ENCODE measurements at regions of chr5 and their contacts with region 1.

Region 1: DNA sequence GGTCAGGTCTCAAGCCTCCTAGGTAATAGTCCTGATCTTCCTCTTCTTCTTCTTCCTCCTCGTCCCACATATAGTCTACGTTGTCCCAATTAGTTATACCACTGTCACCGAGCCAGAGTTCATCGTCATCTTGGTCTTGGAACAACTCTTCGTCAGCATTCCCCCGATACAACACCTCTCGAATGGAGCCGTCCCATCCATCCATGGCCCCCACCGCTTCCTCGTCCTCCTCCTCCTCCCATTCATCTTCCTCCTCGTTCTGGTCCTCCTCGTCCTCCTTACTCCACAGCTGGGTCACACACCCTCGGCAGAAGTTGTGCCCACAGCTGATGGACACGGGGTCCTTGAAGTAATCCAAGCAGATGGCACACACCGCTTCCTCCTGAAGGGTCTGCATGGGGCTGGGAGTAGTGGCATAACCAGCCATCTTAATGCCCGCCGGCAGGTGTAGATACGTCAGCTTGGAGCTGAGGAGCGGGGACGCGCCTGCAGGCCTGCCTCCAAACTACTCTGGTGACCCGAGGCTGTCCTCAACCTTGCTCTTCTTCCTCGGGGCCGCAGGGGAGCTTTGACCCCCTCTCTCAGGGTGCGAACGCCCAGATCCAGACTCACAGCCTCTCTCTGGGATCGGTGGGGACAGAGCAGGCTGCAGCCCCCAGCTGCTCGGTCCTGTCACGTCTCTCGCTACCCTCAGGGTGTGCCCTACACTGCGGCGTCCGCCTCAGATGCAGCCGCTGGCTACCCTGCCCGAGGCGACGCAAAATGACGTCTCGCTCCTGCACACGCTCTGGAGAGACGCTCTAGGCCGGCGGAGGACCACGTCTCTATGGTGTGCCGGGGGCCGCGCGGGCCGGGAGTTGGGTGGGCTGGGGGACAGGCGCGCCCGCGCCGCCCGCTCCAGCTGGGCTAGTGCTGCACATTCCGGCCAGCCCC is at the start of gene TRIM52:
- DNase-seq: peak; percentile 88
- H3K4me3 Mint-ChIP-seq: peak within 1 kb of the TSS; percentile 99
- H3K27ac Mint-ChIP-seq: peak within 1 kb of the TSS; percentile 94
- H3K4me1 Mint-ChIP-seq: peaks cover 40% of the 10 kb centered on the region
- H3K27me3 Mint-ChIP-seq: no peaks in the 10 kb centered on the region
- total RNA-seq, gene TRIM52: 15.5 and 16.9 TPM in 2 replicates

Region 2: GRCh38 chr5:180810210-180810958 is 450.3 kb before region 1 on chr5:
- intact Hi-C with region 1: loop called (anchors 5 kb)
- DNase-seq: peak; percentile 92
- H3K4me3 Mint-ChIP-seq: peak overlapping the region; percentile 79
- H3K27ac Mint-ChIP-seq: peak overlapping the region; percentile 99
- H3K4me1 Mint-ChIP-seq: peaks cover 69% of the 10 kb centered on the region
- H3K27me3 Mint-ChIP-seq: no peaks in the 10 kb centered on the region